ENCODE measurements at regions of chr4 and their contacts with region 1.

Region 1: DNA sequence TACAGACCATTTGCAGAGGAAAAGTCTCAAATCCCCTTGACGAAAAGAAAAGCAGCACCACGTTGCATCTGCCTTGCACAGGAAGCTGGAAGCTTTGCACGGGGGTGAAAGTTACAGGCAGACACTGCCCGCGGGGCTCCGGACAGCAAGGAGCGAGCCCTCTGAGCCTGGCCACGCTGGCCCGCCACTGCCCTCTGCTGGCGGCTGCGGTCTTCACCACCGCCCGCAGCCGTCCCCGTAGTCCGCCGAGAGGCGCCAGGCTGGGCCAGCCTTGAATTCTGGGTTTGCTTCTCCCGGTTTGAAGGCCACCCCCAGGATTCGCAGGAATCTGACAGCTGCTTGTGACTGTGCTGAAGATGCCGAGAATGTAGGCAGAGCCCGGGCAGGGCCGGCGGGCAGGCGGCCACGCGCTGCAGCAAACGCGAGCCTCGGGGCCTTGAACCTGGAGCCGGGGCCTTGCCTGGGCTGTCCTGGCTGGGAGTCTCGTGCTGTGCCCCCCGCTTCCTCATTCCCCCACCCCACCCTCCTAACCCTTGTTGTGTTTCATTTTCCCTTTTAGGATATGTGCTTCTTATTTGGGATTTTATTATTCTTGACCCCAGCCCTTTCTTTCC is 49.2 kb downstream of the ENPP6 start:
- DNase-seq: peak; percentile 86
- H3K4me3 ChIP-seq: peak overlapping the region; percentile 8 to 24
- H3K27ac ChIP-seq: peak overlapping the region; percentile 51 to 83
- H3K4me1 ChIP-seq: peaks cover 6% of the 10 kb centered on the region
- H3K27me3 ChIP-seq: no peaks in the 10 kb centered on the region
- CTCF ChIP-seq: peak; percentile 88 to 92 (median 91)
- POLR2A ChIP-seq: no peak

Region 2: DNA sequence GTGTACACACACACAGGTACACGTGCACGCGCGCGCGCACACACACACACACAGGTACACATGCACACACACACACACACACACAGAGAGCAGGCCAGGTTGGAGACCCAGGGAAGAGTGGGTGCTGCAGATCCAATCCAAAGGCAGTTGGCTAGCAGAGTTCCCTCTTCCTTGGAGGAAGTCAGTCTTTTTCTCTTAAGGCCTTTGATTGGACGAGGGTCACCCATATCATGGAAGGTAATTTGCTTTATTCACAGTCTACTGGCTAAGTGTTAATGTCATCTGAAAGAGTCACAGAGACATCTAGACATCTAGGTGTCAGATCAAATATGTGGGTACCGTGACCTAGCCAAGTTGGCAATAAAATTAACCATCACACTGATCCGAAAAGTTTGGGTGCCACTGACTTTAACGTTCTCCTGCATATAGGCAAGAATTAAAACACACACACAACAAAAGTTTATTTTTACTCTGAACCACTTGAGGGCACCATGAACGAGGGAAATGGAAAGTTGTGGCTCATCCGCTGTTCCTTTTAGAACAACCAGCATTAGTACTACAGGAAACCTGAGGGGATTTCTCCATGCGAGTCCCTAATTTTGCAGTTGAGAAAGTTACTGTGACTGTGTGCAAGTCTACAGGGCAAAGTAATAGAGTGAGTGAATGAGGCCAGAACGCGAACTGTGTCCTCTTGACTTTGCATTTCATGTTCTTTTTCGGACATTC is 329.4 kb before region 1 on chr4:
- intact Hi-C with region 1: loop called (anchors 5 kb)
- DNase-seq: no peak
- H3K4me3 ChIP-seq: no peak overlapping the region
- H3K27ac ChIP-seq: no peak overlapping the region
- H3K4me1 ChIP-seq: no peaks in the 10 kb centered on the region
- H3K27me3 ChIP-seq: no peaks in the 10 kb centered on the region
- CTCF ChIP-seq: peak in 1 of 3 experiments; percentile 21
- POLR2A ChIP-seq: no peak

Region 3: DNA sequence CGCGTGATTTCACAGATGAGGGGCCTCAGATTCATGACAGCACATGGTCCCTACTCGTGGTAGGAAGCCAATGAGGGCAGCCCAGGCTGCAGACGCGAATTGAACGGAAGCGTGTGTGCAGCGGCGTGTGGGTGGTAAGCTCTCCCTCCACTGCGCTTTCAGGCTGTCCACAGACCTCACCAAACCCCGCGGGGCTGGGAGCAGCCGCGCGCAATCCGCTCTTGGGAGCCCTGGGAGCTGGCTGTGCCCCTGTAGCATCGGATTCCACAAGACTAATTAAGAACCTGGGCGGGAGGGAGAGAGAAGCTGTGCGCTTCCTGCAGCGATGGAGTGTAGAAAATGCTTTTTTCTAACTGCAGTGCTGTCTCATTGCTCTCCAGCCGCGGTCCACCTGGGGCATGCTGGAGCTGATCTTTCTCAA is 128.5 kb before region 1 on chr4:
- intact Hi-C with region 1: no loop called
- DNase-seq: peak; percentile 29
- H3K4me3 ChIP-seq: peak overlapping the region in 1 of 2 donors; percentile 21
- H3K27ac ChIP-seq: no peak overlapping the region
- H3K4me1 ChIP-seq: peaks cover 3% of the 10 kb centered on the region
- H3K27me3 ChIP-seq: no peaks in the 10 kb centered on the region
- CTCF ChIP-seq: no peak
- POLR2A ChIP-seq: no peak

Region 4: GRCh38 chr4:184282251-184282713 is 113.8 kb after region 1 on chr4:
- intact Hi-C with region 1: no loop called
- DNase-seq: no peak
- H3K4me3 ChIP-seq: no peak overlapping the region
- H3K27ac ChIP-seq: no peak overlapping the region
- H3K4me1 ChIP-seq: peaks cover 4% of the 10 kb centered on the region
- H3K27me3 ChIP-seq: no peaks in the 10 kb centered on the region
- CTCF ChIP-seq: no peak
- POLR2A ChIP-seq: no peak